SK-N-SH (cell line): ENCODE measurements at regions of chr9 and their contacts with region 1.

Region 1: DNA sequence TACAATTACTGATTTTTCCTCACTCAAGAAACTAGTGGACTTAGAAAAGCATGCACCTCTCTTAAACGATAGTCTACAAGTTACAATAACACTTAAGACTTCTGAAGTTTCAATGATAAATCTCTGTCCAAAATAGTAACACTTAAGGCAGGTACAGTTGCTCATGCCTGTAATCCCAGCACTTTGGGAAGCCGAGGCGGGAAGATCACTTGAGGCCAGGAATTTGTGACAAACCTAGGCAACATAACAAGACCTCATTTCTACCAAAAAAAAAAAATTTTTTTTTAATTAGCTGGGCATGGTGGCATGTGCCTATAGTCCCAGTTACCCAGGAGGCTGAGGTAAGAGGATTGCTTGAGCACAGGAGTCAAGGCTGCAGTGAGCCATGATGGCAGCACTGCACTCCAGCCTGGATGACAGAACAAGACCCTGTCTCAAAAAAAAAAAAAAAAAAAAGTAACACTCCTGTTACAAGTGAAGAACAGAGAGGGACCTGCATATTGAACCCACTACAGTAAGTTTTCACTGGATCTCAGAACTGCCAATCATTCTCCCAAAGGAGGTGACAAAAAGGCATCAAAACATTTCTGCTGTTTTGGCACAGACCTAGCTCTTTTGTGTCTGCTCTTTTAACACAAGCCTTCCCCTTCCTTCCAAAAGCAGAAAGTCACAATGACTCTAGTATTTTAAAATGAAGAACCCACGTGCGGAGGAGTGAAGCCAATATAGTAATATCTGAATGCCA is 3.5 kb downstream of the ABITRAM start:
- DNase-seq: no peak
- H3K4me3 ChIP-seq: no peak overlapping the region
- H3K27ac ChIP-seq: no peak overlapping the region
- H3K4me1 ChIP-seq: peaks cover 2 to 7% of the 10 kb centered on the region in 2 experiments; a peak in 2 of 4 replicates
- H3K27me3 ChIP-seq: no peaks in the 10 kb centered on the region
- CTCF ChIP-seq: no peak
- EP300 ChIP-seq: no peak
- RAD21 ChIP-seq: no peak

Region 2: DNA sequence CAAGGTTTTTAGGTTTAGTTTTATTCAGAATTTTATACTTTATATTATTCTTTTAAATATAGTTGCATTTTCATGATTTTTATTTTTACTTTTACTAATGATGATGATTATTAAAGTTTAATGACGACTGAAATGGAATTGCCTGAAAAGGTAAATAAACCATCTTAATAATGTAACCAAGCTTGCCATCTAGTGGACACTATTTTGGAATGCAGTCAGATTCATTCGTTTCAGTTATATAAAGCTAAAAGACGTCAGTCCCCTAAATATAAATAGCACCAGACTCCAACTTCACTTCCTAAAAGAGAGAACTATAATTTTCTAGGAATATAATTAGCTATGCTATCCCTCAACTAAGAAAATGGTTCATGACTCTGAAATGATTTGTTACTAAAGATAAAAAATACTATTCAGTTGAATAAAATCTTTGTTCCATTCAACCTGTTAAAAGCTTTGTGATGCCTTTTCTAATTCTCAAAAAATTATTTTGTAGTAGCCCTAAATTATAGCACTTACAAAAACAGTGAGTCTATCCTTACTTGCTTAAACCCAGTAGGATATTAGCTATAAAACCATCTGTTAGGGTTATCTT is 16.3 kb after region 1 on chr9:
- CTCF ChIA-PET with region 1: interaction called, 21 read pairs
- POLR2A ChIA-PET with region 1: no interaction called
- DNase-seq: peak; percentile 40
- H3K4me3 ChIP-seq: no peak overlapping the region; a peak in 1 of 4 replicates
- H3K27ac ChIP-seq: peak overlapping the region; percentile 23 to 39; a peak in 1 of 4 replicates
- H3K4me1 ChIP-seq: peaks cover 2 to 11% of the 10 kb centered on the region in 2 experiments; a peak in 3 of 4 replicates
- H3K27me3 ChIP-seq: no peaks in the 10 kb centered on the region
- CTCF ChIP-seq: peak; percentile 78
- EP300 ChIP-seq: no peak
- RAD21 ChIP-seq: peak; percentile 69

Region 3: GRCh38 chr9:109328978-109329637 is 391.4 kb after region 1 on chr9:
- CTCF ChIA-PET with region 1: no interaction called
- POLR2A ChIA-PET with region 1: no interaction called
- DNase-seq: no peak
- H3K4me3 ChIP-seq: no peak overlapping the region
- H3K27ac ChIP-seq: no peak overlapping the region
- H3K4me1 ChIP-seq: peaks cover 0 to 11% of the 10 kb centered on the region in 2 experiments; a peak in 1 of 4 replicates
- H3K27me3 ChIP-seq: no peaks in the 10 kb centered on the region
- CTCF ChIP-seq: no peak
- EP300 ChIP-seq: no peak
- RAD21 ChIP-seq: no peak